ENCODE measurements at regions of chr19 and their contacts with region 1.

Region 1: DNA sequence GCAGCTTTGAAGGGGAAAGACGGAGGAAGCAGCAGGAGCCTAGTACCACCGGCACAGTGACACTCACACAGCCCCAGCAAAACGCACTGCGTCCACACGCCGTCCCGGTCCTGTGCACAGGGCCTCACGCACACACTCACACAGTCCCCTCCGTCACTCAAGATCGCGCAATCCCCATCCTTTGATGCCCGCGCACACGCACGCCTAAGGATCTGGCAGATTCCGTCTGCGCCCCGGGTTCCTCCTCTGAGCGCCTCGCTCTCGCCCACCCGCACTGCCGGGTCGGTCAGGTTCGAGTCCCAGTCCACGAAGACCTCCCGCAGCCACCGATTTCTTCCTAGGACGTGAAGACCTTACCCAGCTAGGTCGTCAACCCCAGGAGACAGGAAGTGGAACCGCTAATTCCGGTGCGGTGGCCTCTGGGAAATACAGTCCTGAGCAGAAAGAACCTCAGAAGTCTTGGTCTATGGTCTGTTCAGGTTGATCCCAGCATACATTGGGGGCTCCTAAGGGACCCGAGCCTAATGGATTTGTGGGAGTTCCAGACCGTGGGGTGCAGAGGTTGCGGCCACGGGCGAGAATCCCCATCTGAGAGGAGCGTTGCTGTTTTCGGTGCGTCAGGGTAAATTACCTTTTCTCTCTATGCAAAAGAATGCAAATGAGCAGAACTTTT is at the start of gene ZNF780B:
- DNase-seq: peak; percentile 67
- H3K4me3 Mint-ChIP-seq: peak within 1 kb of the TSS; percentile 99
- H3K27ac Mint-ChIP-seq: peak within 1 kb of the TSS; percentile 95
- H3K4me1 Mint-ChIP-seq: peaks cover 28% of the 10 kb centered on the region
- H3K27me3 Mint-ChIP-seq: peaks cover 5% of the 10 kb centered on the region
- total RNA-seq, gene ZNF780B: 19.5 and 20.5 TPM in 2 replicates

Region 2: GRCh38 chr19:39996811-39997594 is 59.0 kb before region 1 on chr19 and contains the start of gene ZNF546:
- intact Hi-C with region 1: loop called (anchors 5 kb)
- DNase-seq: peak; percentile 89
- H3K4me3 Mint-ChIP-seq: peak within 1 kb of the TSS; percentile 98
- H3K27ac Mint-ChIP-seq: peak within 1 kb of the TSS; percentile 96
- H3K4me1 Mint-ChIP-seq: peaks cover 28% of the 10 kb centered on the region
- H3K27me3 Mint-ChIP-seq: no peaks in the 10 kb centered on the region
- total RNA-seq, gene ZNF546: 4.6 and 5.2 TPM in 2 replicates

Region 3: GRCh38 chr19:40035996-40036395 is 20.0 kb before region 1 on chr19:
- intact Hi-C with region 1: no loop called
- DNase-seq: no peak
- H3K4me3 Mint-ChIP-seq: no peak overlapping the region
- H3K27ac Mint-ChIP-seq: no peak overlapping the region
- H3K4me1 Mint-ChIP-seq: no peaks in the 10 kb centered on the region
- H3K27me3 Mint-ChIP-seq: no peaks in the 10 kb centered on the region

Region 4: DNA sequence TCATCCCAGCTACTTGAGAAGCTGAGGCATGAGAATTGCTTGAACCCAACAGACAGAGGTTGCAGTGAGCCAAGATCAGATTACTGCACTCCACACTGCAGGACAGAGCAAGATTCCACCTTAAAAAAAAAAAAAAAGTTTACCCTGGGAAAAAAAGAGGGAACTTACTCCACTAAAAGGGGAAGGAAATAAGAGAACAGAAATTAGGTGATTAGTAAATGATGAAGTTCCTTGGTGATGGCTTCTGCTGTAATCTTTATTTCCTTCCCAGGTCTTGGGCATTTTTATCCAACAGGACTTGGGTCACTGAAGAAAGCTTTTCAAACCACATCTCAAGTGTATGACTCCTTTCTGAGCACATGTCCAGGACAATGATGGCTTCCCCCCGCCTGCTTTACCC is 25.4 kb after region 1 on chr19:
- intact Hi-C with region 1: no loop called
- DNase-seq: no peak
- H3K4me3 Mint-ChIP-seq: no peak overlapping the region
- H3K27ac Mint-ChIP-seq: no peak overlapping the region
- H3K4me1 Mint-ChIP-seq: no peaks in the 10 kb centered on the region
- H3K27me3 Mint-ChIP-seq: no peaks in the 10 kb centered on the region